Endothelial cell of umbilical vein (primary cell): ENCODE measurements at regions of chrX and their contacts with region 1.

Region 1: GRCh38 chrX:52995135-52996020 is 37.1 kb upstream of the FAM156A start:
- DNase-seq: peak; percentile 95
- H3K4me3 ChIP-seq: peak overlapping the region; percentile 55 to 89 (median 67)
- H3K27ac ChIP-seq: peak overlapping the region; percentile 58
- H3K4me1 ChIP-seq: peaks cover 6% of the 10 kb centered on the region
- H3K27me3 ChIP-seq: no peaks in the 10 kb centered on the region
- CTCF ChIP-seq: peak; percentile 37 to 66
- POLR2A ChIP-seq: no peak

Region 2: DNA sequence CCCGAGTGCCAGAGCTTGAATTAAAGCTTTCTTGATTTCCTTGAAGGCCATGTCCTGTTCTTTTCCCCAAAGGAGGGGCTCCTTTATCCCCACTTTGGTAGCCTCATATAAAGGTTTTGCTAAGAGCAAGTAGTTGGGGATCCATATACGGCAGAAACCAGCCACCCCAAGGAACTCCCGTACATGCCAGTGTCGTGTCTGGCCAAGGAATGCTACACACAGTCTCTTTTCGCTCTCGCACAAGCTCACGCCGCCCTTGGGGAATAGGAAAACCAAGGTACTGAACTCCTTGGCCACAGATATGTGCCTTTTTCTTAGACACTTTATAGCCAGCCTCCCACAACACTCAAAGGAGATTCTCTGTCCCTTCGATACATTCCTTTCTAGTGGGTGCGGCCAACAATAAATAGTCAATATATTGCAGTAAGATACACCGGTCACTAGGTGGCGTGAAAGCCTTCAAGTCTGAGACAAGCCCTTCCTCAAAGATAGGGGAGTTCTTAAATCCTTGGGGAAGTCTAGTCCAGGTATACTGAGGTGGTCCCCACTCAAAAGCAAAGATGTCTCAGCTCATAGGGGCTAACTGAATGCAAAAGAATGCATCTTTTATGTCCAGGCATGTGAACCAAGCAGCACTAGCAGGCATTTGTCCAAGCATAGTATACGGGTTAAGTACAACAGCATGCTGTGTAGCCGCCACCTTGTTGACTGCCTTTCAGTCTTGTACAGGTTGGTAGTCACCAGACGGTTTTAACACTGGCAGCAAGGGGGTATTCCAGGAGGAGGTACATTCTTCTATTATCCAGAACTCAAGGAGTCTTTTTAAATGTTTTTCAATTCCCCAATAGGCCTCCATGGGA is 420.7 kb before region 1 on chrX:
- CTCF ChIA-PET with region 1: no interaction called
- POLR2A ChIA-PET with region 1: no interaction called
- dilution Hi-C with region 1: no loop called
- intact Hi-C with region 1: loop called (anchors 5 kb)
- DNase-seq: peak; percentile 41
- H3K4me3 ChIP-seq: no peak overlapping the region
- H3K27ac ChIP-seq: no peak overlapping the region
- H3K4me1 ChIP-seq: no peaks in the 10 kb centered on the region
- H3K27me3 ChIP-seq: no peaks in the 10 kb centered on the region
- CTCF ChIP-seq: peak; percentile 16 to 45
- POLR2A ChIP-seq: no peak

Region 3: DNA sequence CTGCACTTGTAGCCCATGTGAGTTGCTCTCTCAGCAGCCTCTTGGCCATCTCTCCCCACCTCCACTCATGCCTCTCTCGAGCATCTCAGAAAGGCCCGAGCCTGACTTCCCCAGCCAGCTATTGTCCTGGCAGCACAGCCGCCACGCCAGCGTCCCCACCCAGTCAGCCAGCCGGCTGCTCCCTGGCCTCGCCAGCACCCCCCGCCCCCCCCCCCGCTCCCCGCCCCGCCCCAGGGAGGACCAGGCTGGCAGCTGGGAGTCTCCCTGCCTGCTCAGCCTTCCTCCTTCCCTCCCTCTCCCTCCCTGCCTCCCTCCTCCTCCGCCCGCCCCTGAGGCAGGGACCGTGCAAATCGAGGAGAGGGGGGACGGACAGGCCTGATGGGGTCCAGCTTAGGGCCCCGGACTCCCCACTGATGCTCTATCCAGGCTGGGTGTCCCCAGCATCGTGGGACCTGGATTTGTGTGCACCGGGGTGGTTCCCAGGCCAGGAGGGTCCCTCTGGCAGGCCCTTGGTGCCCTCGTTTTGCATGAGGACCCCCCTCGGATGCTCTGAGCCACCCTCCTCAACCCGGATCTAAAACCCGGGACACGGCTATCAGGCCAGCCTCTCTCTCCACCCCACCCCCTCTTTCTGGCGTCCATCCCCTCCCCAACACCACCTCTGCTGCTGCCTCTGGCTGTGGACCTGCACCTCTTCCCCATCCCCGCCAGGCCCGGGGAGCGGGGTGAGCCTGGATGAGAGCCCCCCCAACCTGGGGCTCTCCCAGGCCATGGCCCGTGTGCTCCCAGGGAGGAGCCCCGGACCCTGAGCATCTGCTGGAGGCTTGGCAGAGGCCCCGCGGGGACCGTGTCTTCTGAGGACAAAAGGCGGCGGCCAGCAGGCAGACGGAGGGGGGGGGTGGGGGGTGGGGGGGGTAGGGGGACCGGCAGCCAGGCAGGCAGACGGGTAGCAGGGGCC is 53.1 kb after region 1 on chrX and contains the start of gene GPR173:
- CTCF ChIA-PET with region 1: no interaction called
- POLR2A ChIA-PET with region 1: no interaction called
- dilution Hi-C with region 1: no loop called
- intact Hi-C with region 1: loop called (anchors 1 kb)
- DNase-seq: peak; percentile 63
- H3K4me3 ChIP-seq: peak within 1 kb of the TSS; percentile 70 to 79 (median 70)
- H3K27ac ChIP-seq: peak within 1 kb of the TSS; percentile 65
- H3K4me1 ChIP-seq: peaks cover 17% of the 10 kb centered on the region
- H3K27me3 ChIP-seq: no peaks in the 10 kb centered on the region
- CTCF ChIP-seq: no peak
- POLR2A ChIP-seq: no peak
- total RNA-seq, gene GPR173: 8.3 and 11.3 TPM in 2 replicates